ENCODE measurements at regions of chr4 and their contacts with region 1.

Region 1: DNA sequence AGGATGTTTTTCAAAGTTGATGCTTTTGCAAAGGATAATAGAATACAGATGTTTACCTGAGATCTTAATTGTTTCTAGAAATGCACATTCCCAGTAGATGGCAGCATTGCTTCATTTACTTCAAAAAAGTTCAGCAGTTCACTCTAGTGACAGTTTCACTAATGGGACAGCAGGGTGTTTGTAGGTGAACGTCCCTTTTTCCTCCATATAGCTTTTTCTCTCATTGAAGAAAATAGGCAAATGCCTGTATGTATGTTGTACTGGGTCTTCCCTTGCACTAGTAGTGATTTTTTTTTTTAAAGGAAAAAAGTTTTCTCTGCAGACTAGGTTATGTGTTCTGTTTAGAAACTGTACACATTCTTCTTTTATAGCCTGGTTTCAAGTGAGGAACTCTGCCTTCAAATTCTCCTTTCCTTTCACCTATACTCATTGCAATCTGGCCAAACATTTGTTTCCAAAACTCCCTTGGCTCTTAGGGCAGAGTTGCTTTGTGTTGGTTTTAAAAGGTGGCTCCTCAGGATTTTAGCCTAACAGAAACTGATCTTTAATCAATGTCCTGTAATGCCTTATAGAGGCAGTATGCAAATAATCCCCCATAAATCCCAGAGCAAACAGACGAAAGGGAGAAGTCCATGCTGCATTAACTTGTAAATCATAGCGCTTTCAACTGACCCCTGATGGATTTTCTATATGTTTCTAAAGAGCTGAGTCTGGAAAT is 86.3 kb downstream of the EGF start:
- DNase-seq: peak; percentile 38
- ATAC-seq: peak; percentile 65
- H3K4me3 ChIP-seq: no peak overlapping the region
- H3K27ac ChIP-seq: no peak overlapping the region
- H3K4me1 ChIP-seq: peaks cover 15% of the 10 kb centered on the region
- H3K27me3 ChIP-seq: no peaks in the 10 kb centered on the region
- CTCF ChIP-seq: peak; percentile 48 to 79 (median 67); a peak in 5 of 6 replicates
- EP300 ChIP-seq: no peak
- POLR2A ChIP-seq: no peak
- RAD21 ChIP-seq: peak; percentile 85

Region 2: GRCh38 chr4:110013904-110014632 is 15.0 kb after region 1 on chr4:
- CTCF ChIA-PET with region 1: interaction called, 23 read pairs
- POLR2A ChIA-PET with region 1: no interaction called
- RAD21 ChIA-PET with region 1: interaction called, 4 read pairs
- SMC1A ChIA-PET with region 1: interaction called, 5 read pairs
- in situ Hi-C with region 1: no loop called
- intact Hi-C with region 1: no loop called
- DNase-seq: no peak
- ATAC-seq: no peak
- H3K4me3 ChIP-seq: no peak overlapping the region
- H3K27ac ChIP-seq: no peak overlapping the region
- H3K4me1 ChIP-seq: no peaks in the 10 kb centered on the region
- H3K27me3 ChIP-seq: no peaks in the 10 kb centered on the region
- CTCF ChIP-seq: no peak
- EP300 ChIP-seq: no peak
- POLR2A ChIP-seq: no peak
- RAD21 ChIP-seq: no peak

Region 3: GRCh38 chr4:110109485-110110081 is 110.6 kb after region 1 on chr4:
- CTCF ChIA-PET with region 1: no interaction called
- POLR2A ChIA-PET with region 1: no interaction called
- RAD21 ChIA-PET with region 1: no interaction called
- SMC1A ChIA-PET with region 1: no interaction called
- in situ Hi-C with region 1: no loop called
- intact Hi-C with region 1: no loop called
- DNase-seq: no peak
- ATAC-seq: no peak
- H3K4me3 ChIP-seq: no peak overlapping the region
- H3K27ac ChIP-seq: no peak overlapping the region
- H3K4me1 ChIP-seq: peaks cover 26% of the 10 kb centered on the region
- H3K27me3 ChIP-seq: no peaks in the 10 kb centered on the region
- CTCF ChIP-seq: no peak
- EP300 ChIP-seq: no peak
- POLR2A ChIP-seq: no peak
- RAD21 ChIP-seq: no peak

Region 4: DNA sequence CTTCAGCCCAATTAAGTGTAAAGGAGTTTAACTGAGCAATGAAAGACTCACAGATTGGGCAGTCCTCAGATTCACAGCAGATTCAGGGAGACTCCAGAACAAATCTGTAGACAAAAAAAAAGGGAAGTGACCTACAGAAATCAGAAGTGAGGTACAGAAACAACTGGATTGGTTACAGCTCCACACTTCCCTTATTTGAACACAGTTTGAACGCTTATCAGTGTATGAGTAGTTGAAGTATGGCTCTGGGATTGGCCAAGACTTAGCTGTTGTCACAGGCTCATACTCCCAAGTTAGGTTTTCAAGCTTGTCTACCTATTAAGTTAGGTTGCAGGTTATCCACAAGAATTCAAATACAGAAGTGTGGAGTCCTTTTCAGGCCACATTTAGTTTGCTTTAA is 311.8 kb after region 1 on chr4:
- CTCF ChIA-PET with region 1: interaction called, 17 read pairs
- POLR2A ChIA-PET with region 1: no interaction called
- RAD21 ChIA-PET with region 1: interaction called, 5 read pairs
- SMC1A ChIA-PET with region 1: interaction called, 5 read pairs
- in situ Hi-C with region 1: loop called (anchors 10 kb)
- intact Hi-C with region 1: no loop called
- DNase-seq: peak; percentile 17
- ATAC-seq: peak; percentile 88
- H3K4me3 ChIP-seq: no peak overlapping the region
- H3K27ac ChIP-seq: no peak overlapping the region
- H3K4me1 ChIP-seq: no peaks in the 10 kb centered on the region
- H3K27me3 ChIP-seq: no peaks in the 10 kb centered on the region
- CTCF ChIP-seq: no peak
- EP300 ChIP-seq: no peak
- POLR2A ChIP-seq: no peak
- RAD21 ChIP-seq: no peak

Region 5: DNA sequence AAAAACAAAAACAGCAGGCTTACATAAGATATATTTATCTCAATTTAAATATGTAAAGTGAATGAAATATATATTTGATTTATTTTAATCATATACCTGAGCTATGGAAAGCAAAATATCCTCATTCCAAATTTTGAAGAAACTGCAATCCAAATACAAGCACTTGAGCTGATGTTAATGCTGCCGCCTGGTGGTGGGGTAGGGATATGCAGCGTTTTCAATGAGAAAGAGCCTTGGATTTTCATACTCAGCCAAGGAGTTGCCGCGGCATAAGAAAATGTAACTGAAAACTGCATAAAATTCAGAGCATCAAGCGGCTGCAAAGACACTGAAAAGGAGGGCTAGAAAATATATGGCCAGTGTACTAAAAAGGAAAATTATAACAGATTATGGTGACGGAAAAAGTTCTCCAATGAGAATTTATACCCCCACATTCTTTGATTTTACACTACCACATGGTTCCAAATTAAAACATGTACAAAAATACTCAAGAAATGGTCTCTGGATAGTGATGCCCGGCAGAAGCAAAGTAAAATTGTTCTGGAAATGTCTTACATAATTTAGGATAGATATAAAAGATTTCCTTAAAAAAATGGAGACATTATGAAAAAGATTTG is 1284.1 kb after region 1 on chr4:
- CTCF ChIA-PET with region 1: no interaction called
- POLR2A ChIA-PET with region 1: no interaction called
- RAD21 ChIA-PET with region 1: no interaction called
- SMC1A ChIA-PET with region 1: no interaction called
- in situ Hi-C with region 1: loop called (anchors 25 kb)
- intact Hi-C with region 1: loop called (anchors 5 kb)
- DNase-seq: no peak
- ATAC-seq: peak; percentile 63
- H3K4me3 ChIP-seq: no peak overlapping the region
- H3K27ac ChIP-seq: no peak overlapping the region
- H3K4me1 ChIP-seq: no peaks in the 10 kb centered on the region
- H3K27me3 ChIP-seq: no peaks in the 10 kb centered on the region
- CTCF ChIP-seq: peak; percentile 86 to 94 (median 90)
- EP300 ChIP-seq: no peak
- POLR2A ChIP-seq: no peak
- RAD21 ChIP-seq: peak; percentile 75

Region 6: DNA sequence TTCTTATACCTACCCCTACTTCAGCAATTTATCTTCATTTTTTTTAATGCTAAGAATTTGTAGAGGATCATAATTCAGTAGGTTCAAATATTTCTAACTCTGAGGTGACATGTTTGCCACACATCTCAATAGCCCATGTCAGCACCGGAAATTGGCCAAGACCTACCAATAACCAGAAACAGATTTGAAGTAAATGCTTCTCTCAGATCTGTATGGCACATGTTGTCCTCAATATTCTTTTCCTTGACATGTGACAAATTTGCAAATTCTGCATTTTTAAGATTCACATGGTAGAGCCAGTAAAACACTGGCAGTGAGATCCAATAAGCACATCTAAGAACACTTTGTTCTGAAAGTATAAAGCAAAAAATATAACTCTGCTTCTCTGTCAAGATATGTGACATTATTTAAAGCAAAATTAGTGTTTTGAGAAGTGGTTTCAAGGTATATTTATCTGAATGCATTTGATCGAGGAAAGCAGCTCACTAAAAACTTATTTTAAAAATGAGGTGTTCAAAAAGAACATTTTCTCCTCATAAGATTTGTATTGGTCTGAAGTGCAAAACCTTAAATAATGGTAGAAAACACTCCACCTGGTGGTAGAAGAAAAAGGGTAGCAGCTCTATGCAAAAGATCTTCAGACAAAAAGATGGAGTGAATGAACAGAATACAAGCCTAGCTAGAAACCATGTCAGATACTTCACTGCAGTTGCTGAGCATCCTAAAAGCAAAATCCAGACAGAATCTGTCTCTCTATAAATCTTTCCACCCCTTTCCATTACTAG is 1632.4 kb after region 1 on chr4:
- CTCF ChIA-PET with region 1: no interaction called
- POLR2A ChIA-PET with region 1: no interaction called
- RAD21 ChIA-PET with region 1: no interaction called
- SMC1A ChIA-PET with region 1: interaction called, 3 read pairs
- in situ Hi-C with region 1: no loop called
- intact Hi-C with region 1: loop called (anchors 5 kb)
- DNase-seq: no peak
- ATAC-seq: peak; percentile 69
- H3K4me3 ChIP-seq: no peak overlapping the region
- H3K27ac ChIP-seq: no peak overlapping the region
- H3K4me1 ChIP-seq: no peaks in the 10 kb centered on the region
- H3K27me3 ChIP-seq: no peaks in the 10 kb centered on the region
- CTCF ChIP-seq: peak in 2 of 3 experiments; percentile 32 to 50; a peak in 4 of 6 replicates
- EP300 ChIP-seq: no peak
- POLR2A ChIP-seq: no peak
- RAD21 ChIP-seq: 0 out of 2 replicates have a peak, but pooled peaks have one; percentile 22